MCF 10A (cell line): ENCODE measurements at regions of chr17 and their contacts with region 1.

Region 1: DNA sequence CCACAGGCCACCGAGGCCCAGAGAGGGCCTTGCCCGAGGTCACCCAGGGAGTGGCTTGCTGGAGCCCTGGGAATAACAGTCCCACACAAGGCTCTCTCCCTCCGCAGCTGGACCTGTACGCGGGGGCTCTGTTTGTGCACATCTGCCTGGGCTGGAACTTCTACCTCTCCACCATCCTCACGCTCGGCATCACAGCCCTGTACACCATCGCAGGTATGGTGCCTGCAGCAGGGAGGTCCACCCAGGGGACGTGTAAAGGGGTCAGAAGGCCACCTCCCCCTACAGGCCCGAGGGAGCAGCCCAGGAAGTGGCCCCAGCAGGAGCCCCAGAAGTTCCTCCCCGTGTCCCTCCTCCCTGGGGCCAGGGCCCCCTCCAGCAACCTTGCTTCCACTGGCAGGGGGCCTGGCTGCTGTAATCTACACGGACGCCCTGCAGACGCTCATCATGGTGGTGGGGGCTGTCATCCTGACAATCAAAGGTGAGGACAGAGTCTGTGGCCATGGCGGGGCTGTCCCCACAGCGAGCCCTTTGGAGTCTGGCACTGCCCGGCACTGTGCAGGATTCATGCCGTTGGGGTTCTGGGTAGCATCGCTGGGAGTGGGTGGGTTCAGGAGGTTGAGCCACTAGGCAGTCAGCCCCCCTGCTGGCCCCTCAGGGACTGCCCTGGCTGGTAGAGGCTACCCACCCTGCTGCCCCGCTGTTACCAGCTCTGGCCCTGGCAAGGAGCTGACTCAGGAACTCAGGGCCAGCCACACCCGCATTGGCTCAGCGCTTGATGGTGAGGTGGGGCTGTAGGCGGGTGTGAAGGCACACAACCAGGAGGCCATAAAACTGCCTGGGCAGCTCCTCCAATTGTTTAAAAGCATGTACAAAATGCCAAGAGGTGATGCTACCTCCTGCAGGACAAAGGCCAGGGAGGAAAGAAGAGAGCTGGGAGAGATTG is 17.3 kb downstream of the SLC5A10 start:
- DNase-seq: peak; percentile 70
- H3K4me3 Mint-ChIP-seq: no peak overlapping the region
- H3K27ac Mint-ChIP-seq: peak overlapping the region; percentile 59
- H3K4me1 Mint-ChIP-seq: peaks cover 12% of the 10 kb centered on the region
- H3K27me3 Mint-ChIP-seq: no peaks in the 10 kb centered on the region
- CTCF ChIP-seq: no peak

Region 2: GRCh38 chr17:18988546-18989173 is 19.4 kb after region 1 on chr17:
- CTCF ChIA-PET with region 1: no interaction called
- POLR2A ChIA-PET with region 1: no interaction called
- intact Hi-C with region 1: no loop called
- DNase-seq: no peak
- H3K4me3 Mint-ChIP-seq: no peak overlapping the region
- H3K27ac Mint-ChIP-seq: no peak overlapping the region
- H3K4me1 Mint-ChIP-seq: no peaks in the 10 kb centered on the region
- H3K27me3 Mint-ChIP-seq: no peaks in the 10 kb centered on the region
- CTCF ChIP-seq: no peak

Region 3: DNA sequence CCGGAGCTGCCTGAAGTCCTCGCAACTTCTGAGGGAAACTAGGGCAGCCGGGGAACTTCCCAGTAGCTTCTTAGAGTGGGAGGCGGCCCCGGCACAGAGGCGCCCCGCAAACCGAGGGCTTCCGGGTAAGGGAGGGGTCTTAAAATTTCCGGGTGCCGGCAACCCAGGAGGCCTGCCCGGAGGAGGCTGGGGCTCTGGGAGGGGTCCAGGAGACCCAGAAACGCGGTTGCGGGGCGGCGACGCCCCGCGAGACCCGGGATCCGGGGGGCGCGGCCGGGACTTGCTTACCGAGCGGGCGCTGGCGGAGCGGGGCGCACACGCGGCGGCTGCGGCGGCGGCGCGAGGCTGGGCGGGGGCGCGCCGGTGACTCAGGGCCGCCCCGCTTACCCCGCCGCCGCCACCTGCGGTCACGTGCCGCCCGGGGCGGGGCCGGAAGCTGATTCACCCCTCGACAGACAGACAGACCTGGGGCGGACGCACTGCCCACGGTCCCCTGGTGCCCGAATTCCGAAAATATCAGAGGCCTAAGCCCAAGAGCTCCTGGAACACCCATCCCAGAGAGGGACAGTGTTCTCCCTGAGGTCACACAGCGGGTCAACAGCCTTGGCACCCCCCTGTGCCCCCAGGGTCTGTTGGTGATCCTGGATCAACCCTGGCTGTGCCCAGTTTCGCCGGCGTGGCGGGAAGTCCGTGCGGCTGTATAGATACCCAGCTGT is 35.4 kb after region 1 on chr17 and contains the start of gene FAM83G:
- CTCF ChIA-PET with region 1: no interaction called
- POLR2A ChIA-PET with region 1: no interaction called
- intact Hi-C with region 1: loop called (anchors 2 kb)
- DNase-seq: peak; percentile 87
- H3K4me3 Mint-ChIP-seq: peak within 1 kb of the TSS; percentile 82
- H3K27ac Mint-ChIP-seq: peak within 1 kb of the TSS; percentile 79
- H3K4me1 Mint-ChIP-seq: peaks cover 11% of the 10 kb centered on the region
- H3K27me3 Mint-ChIP-seq: no peaks in the 10 kb centered on the region
- CTCF ChIP-seq: no peak
- total RNA-seq, gene FAM83G: 47.7 and 50.1 TPM in 2 replicates